Right ventricle myocardium superior (tissue), 1 donor: ENCODE measurements at regions of chr16 and their contacts with region 1.

Region 1: DNA sequence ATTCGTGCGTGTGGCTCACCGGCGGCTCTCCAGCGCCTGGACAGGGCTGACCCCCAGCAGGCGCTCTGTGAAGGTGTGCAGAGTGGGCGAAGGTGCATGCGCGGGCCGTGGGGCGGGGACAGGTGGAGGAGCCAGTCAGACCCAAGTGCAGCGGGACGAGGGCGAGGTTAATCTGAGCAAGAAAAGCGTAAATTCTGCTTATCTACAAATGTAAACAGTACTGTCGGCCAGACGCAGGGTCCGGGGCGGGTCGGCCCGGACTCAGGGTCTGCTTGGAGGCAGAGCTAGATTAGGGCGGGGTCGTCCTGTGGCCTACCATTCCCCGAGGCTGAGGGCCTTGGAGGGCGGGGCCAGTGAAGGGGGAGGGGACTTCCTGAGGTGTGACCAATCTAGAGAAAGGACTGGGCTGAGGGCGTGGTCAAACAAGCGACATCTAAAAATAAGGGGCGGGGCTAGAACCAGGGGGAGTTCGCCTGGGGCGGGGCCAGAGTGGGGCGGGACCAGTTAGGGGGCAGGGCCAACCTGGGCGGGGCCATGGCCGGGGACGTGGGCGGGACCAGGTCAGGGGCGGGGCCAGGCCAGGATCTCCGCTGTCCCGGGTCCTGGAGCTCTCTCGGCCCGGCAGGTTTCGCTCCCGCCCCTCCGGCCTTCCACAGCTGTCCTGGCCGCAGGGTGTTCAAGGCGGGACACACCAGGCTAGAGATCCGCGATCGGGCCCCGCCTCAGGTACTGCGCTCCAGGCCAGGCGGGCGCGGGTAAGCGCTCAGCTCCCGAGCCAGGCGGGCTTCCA is at the start of gene SEC14L5:
- DNase-seq: peak; percentile 97
- ATAC-seq: peak; percentile 97
- total RNA-seq, gene SEC14L5: 26.2 TPM

Region 2: DNA sequence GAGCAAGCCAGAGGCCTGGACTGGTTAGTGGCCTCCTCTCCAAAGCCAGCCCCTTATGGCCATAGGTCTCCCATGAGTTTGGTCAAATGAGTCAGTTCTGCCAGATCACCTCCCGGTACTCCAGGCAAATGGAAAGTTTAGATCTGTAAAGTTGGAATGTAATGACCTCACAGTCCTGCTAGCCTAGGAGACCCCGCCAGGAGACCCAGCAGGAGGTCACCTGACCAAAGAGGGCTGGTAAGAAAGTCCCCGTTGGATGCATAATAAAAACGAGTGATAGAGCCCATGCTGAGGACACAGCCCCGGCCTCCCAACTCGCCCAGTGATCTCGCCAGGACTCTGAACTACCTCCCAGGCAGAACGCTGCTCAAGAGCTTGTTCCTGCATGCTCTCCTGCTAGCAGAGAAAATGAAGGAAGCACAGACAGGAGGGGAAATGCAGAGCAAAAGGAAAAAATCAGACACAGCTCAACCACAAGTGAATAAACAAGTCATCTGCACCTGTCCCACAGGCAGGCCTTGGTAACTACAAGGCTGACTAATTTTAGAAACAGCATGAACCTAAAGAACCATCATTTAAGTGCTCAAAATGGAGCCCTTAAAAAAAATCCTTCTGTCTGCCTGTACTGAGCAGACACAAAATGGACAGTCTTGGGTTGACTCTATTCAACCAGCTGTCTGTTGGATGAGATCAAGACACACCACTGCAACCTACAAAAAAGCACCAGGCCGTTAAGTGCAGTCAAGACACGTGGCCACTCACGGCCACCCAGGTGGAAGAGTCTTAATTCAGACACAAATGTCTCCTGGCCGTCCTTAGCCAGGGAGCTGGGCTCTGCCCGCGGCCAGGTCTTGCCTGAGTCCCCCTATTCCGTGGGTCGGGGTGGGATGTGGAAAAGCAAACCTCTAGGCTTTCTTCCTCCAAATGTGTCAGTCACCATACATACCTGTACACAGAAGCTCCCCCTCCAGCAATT is 428.5 kb before region 1 on chr16:
- intact Hi-C with region 1: no loop called
- DNase-seq: no peak
- ATAC-seq: no peak

Region 3: DNA sequence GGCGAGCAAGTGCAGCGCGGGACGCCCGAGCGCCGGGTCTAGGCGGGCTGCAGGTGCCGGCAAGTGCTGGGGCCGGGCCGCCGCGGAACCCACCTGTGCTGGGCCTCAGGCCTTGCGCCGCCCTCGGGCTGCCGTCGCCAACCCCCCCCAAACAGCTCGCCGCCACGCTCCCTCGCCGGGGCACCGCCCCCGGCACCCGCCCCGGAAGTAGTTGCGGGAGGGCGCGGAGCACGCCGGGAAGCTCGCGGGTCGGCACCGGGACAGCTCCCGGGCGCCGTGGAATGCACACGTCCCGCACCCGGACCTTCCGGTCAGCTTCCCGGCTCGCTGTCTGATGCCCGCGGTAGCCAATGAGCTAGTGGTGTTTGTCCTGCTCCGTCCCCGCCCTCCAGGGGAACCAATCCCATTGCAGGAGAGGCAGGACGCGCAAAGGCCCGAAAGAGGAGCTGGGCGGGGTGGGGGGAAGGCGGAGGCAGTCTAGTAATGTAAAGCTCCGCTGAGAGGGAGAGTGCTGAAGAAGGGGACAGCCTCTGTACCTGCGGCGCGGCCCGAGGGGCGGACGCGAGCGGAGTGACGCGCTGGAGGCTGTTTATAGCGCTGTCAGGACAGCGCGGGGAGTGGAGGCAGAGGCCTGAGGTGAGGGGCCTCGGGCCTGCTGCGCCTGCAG is 223.7 kb before region 1 on chr16 and contains the starts of genes ANKS3 and DNAAF8:
- intact Hi-C with region 1: loop called (anchors 10 kb)
- DNase-seq: peak; percentile 97
- ATAC-seq: peak; percentile 98
- total RNA-seq, gene ANKS3: 9.1 TPM
- total RNA-seq, gene DNAAF8: 1.2 TPM